Calu3 (cell line): ENCODE measurements at regions of chr19 and their contacts with region 1.

Region 1: DNA sequence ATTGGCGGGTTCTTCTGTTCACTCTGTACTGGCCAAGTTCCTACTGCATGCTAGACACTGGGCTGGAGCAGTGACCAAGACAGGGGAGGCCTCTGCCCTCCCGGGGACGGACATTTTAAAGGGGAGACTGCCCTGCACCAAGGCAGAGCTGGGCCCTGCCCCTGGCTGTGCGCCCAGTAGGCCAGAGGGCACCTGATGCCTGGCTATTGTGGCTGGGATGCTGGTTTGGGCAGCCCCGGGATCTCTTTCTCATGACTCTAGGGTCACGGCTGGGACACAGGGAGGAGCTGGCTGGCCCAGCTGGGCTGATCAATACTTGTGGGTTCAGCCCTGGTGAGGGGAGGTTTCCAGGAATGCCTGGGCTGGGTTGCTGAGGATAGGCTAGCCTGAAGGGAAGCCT is 17.7 kb downstream of the LIPE start:
- DNase-seq: peak; percentile 94
- H3K4me3 Mint-ChIP-seq: peak overlapping the region; percentile 9
- H3K27ac Mint-ChIP-seq: peak overlapping the region; percentile 43
- H3K4me1 Mint-ChIP-seq: peaks cover 42% of the 10 kb centered on the region
- H3K27me3 Mint-ChIP-seq: no peaks in the 10 kb centered on the region
- CTCF ChIP-seq: no peak

Region 2: DNA sequence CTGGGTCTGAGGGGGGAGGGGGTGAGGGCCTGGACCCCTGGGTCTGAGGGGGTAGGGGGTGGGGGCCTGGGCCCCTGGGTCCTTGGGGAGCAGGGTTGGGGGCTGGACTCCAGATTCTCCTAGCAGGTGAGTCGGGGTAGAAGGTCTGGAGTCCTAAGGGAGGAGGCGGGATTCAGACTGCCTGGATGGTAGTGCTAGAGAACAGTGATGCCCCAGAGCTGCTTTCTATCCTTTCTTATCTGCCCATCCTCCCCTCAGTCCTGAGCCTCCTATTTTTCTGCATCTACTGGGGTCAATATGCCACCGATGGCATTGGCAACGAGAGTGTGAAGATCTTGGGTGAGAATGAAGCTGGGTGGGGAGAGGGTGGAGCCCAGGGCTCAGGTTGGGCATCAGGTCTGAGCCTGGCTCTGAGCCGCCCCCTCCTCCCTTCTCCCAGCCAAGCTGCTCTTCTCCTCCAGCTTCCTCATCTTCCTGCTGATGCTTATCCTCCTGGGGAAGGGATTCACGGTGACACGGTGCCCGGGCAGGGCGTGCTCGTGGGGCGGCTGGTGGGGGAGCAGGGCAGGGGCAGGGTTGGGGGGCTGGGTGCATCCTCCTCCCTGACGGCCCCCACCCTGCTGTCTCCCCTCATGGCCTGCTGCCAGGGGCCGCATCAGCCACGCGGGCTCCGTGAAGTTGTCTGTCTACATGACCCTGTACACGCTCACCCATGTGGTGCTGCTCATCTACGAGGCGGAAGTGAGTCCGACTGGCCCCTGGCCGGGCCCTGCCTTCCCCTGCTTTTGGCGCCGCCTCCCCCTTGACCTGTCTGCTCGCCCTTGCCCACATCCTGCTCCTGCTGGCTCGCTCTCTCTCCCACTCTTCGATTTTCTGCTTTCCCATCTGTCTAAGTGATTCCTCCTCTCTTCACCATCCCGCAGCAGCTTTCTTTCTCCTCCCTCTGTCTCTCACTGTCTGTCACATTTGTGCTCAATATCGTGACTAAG is 93.0 kb before region 1 on chr19:
- CTCF ChIA-PET with region 1: interaction called, 12 read pairs
- intact Hi-C with region 1: no loop called
- DNase-seq: peak; percentile 71
- H3K4me3 Mint-ChIP-seq: peak overlapping the region; percentile 44
- H3K27ac Mint-ChIP-seq: peak overlapping the region; percentile 15
- H3K4me1 Mint-ChIP-seq: peaks cover 14% of the 10 kb centered on the region
- H3K27me3 Mint-ChIP-seq: peaks cover 58% of the 10 kb centered on the region
- CTCF ChIP-seq: no peak

Region 3: DNA sequence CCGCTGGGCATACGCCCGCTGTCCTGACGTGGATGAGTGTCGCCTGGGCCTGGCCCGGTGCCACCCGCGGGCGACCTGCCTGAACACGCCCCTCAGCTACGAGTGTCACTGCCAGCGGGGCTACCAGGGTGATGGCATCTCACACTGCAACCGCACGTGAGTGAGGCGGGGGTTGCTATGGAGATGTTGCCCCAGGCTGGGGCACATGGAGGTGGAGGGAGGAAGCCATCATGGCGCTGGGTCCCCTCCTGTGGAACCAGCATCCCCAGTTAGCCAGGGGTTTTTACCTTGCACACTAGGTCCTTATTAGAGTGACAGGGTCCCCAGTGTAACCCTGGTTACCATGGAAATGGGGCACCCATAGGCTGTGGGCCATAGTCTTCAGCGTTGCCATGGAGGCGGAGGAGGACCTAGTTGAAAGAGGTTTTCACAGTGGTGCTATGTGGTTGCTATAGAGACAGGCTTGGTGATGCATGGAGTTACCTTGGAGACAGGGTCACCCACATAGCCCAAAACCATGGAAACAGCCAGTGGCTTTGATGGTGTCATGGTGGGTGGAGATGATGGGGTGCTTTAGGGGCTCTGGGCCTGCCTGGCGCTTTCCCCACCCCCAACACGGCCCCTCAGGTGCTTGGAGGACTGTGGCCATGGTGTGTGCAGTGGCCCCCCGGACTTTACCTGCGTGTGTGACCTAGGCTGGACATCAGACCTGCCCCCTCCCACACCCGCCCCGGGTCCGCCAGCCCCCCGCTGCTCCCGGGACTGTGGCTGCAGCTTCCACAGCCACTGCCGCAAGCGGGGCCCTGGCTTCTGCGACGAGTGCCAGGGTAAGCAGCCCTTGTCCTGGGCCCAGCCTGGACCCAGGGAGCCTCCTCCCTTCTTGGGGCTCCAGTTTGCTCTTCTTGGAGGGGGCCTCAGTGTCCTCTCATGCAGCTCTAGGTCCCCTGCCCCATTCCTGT is 56.9 kb before region 1 on chr19:
- CTCF ChIA-PET with region 1: no interaction called
- intact Hi-C with region 1: no loop called
- DNase-seq: no peak
- H3K4me3 Mint-ChIP-seq: no peak overlapping the region
- H3K27ac Mint-ChIP-seq: no peak overlapping the region
- H3K4me1 Mint-ChIP-seq: no peaks in the 10 kb centered on the region
- H3K27me3 Mint-ChIP-seq: no peaks in the 10 kb centered on the region
- CTCF ChIP-seq: no peak

Region 4: DNA sequence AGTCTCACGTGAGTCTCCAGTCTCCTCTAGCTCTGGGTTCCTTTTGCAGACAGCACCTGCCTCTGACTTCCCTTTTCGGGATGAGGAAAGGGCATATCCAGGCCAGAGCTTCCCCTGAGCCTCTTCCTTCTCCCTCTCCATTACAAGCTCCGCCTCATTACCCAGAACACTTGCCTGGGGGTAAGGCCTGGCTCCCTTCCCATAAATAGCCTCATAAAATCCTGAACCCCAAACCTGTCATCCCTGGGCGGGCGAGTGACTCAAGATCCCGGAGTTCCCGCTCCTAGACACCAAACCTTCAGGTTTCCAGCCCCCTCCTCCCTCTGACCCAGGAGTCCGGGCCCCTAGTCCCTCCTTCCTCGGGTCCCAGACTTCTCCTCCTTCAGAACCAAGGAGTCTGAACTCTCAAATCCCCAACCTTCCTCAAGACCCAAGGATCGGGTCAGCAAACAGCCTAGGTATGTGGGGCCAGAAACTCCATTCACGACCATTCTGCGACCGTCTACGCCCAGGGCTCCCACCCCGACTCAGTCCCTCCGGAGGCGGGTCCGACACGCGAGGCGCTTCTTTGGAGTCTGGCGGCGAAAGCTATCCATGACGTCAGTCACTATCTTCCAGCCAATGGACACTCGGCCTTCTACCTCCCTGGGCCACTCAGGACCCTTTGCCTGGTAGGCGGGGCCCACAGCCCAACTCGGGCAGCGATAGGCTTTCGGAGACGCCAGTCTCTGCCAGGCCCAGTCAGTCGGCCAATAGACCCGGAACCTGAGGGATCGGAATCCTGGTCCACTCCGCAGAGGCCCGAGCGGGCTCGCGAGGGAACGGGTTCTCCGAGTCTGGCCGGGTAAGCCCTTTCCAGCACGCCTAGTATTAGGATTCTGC is 12.9 kb before region 1 on chr19:
- CTCF ChIA-PET with region 1: interaction called, 13 read pairs
- intact Hi-C with region 1: no loop called
- DNase-seq: peak; percentile 100
- H3K4me3 Mint-ChIP-seq: peak overlapping the region; percentile 86
- H3K27ac Mint-ChIP-seq: peak overlapping the region; percentile 90
- H3K4me1 Mint-ChIP-seq: peaks cover 29% of the 10 kb centered on the region
- H3K27me3 Mint-ChIP-seq: peaks cover 21% of the 10 kb centered on the region
- CTCF ChIP-seq: no peak

Region 5: GRCh38 chr19:42420055-42420544 is 10.6 kb after region 1 on chr19:
- CTCF ChIA-PET with region 1: interaction called, 14 read pairs
- intact Hi-C with region 1: no loop called
- DNase-seq: peak; percentile 75
- H3K4me3 Mint-ChIP-seq: no peak overlapping the region
- H3K27ac Mint-ChIP-seq: peak overlapping the region; percentile 3
- H3K4me1 Mint-ChIP-seq: peaks cover 36% of the 10 kb centered on the region
- H3K27me3 Mint-ChIP-seq: no peaks in the 10 kb centered on the region
- CTCF ChIP-seq: peak; percentile 86

Region 6: DNA sequence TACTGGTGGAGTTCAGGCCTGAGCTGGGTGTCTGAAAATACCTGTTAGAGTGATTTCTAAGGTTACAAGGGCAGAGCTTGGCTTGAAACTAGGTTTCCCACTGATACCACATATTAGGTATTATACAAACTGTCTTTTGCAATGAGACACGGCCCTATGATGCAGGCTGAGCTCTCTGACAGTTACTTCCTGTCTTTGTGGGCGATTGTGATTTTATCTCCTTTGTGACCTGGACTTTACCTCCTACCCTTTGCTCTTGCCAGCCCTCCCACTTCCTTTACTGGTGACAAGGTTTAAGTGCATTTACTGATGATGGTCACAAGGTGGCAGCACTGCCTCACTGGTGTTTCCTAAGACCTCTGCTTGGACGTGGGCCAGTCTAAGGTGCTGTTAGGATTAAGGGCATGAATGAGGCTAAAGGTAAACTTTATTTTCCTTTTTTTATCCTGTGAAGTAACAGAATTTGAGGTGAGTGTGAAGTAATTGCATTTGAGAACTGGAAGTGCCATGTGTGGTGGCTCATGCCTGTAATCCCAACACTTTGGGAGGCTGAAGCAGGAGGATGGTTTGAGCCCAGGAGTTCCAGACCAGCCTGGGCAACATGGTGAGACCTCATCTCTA is 40.9 kb after region 1 on chr19:
- CTCF ChIA-PET with region 1: no interaction called
- intact Hi-C with region 1: no loop called
- DNase-seq: peak; percentile 85
- H3K4me3 Mint-ChIP-seq: no peak overlapping the region
- H3K27ac Mint-ChIP-seq: no peak overlapping the region
- H3K4me1 Mint-ChIP-seq: peaks cover 16% of the 10 kb centered on the region
- H3K27me3 Mint-ChIP-seq: no peaks in the 10 kb centered on the region
- CTCF ChIP-seq: peak; percentile 98

Region 7: DNA sequence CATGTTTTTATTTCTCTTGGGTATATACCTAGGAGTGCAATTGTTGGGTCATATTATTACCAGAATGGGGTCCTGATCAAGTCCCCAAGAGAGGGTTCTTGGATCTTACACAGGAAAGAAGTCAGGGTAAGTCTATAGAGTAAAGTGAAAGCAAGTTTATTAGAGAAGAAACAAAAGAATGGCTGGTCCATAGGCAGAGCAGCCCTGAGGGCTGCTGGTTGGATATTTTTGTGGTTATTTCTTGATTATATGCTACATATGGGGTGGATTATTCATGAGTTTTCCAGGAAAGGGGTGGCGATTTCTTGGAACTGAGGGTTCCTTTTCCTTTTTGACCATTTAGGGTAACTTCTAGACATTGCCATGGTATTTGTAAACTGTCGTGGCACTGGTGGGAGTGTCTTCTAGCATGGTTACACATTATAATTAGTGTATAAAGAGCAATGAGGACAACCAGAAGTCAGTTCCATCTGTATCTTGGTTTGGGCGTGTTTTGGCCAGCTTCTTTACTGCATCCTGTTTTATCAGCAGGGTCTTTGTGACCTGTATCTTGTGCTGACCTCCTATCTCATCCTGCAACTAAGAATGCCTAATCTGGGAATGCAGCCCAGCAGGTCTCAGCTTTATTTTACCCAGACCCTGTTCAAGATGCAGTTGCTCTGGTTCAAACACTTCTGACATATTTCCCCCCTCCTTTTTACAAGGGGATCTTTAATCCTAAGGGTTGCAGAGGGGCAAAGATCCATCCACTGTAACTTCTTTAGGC is 77.7 kb after region 1 on chr19:
- CTCF ChIA-PET with region 1: no interaction called
- intact Hi-C with region 1: no loop called
- DNase-seq: no peak
- H3K4me3 Mint-ChIP-seq: no peak overlapping the region
- H3K27ac Mint-ChIP-seq: no peak overlapping the region
- H3K4me1 Mint-ChIP-seq: peaks cover 26% of the 10 kb centered on the region
- H3K27me3 Mint-ChIP-seq: no peaks in the 10 kb centered on the region
- CTCF ChIP-seq: no peak